AG04449 (cell line): ENCODE measurements at regions of chr9 and their contacts with region 1.

Region 1: GRCh38 chr9:127199001-127199791 is 65.4 kb upstream of the GARNL3 start:
- DNase-seq: no peak
- H3K4me3 ChIP-seq: no peak overlapping the region
- CTCF ChIP-seq: peak; percentile 76

Region 2: GRCh38 chr9:126947529-126947928 is 251.7 kb before region 1 on chr9:
- CTCF ChIA-PET with region 1: interaction called, 513 read pairs
- POLR2A ChIA-PET with region 1: no interaction called
- DNase-seq: no peak
- H3K4me3 ChIP-seq: no peak overlapping the region
- CTCF ChIP-seq: no peak

Region 3: GRCh38 chr9:126965541-126966428 is 233.4 kb before region 1 on chr9:
- CTCF ChIA-PET with region 1: interaction called, 302 read pairs
- POLR2A ChIA-PET with region 1: no interaction called
- DNase-seq: no peak
- H3K4me3 ChIP-seq: no peak overlapping the region
- CTCF ChIP-seq: peak; percentile 91

Region 4: GRCh38 chr9:127122176-127123063 is 76.8 kb before region 1 on chr9 and contains the start of gene ANGPTL2:
- CTCF ChIA-PET with region 1: interaction called, 20 read pairs
- POLR2A ChIA-PET with region 1: no interaction called
- DNase-seq: peak; percentile 65
- H3K4me3 ChIP-seq: peak within 1 kb of the TSS; percentile 84
- CTCF ChIP-seq: peak; percentile 21

Region 5: GRCh38 chr9:127187231-127187956 is 11.8 kb before region 1 on chr9:
- CTCF ChIA-PET with region 1: interaction called, 61 read pairs
- POLR2A ChIA-PET with region 1: no interaction called
- DNase-seq: peak; percentile 94
- H3K4me3 ChIP-seq: no peak overlapping the region
- CTCF ChIP-seq: no peak

Region 6: GRCh38 chr9:127214421-127215267 is 15.4 kb after region 1 on chr9:
- CTCF ChIA-PET with region 1: interaction called, 78 read pairs
- POLR2A ChIA-PET with region 1: no interaction called
- DNase-seq: no peak
- H3K4me3 ChIP-seq: no peak overlapping the region
- CTCF ChIP-seq: peak; percentile 83

Region 7: GRCh38 chr9:127241354-127241753 is 42.2 kb after region 1 on chr9:
- CTCF ChIA-PET with region 1: no interaction called
- POLR2A ChIA-PET with region 1: no interaction called
- DNase-seq: no peak
- H3K4me3 ChIP-seq: no peak overlapping the region
- CTCF ChIP-seq: no peak

Region 8: GRCh38 chr9:127586537-127586936 is 387.3 kb after region 1 on chr9:
- CTCF ChIA-PET with region 1: no interaction called
- POLR2A ChIA-PET with region 1: no interaction called
- DNase-seq: no peak
- H3K4me3 ChIP-seq: no peak overlapping the region
- CTCF ChIP-seq: peak; percentile 92